IMR-90 (cell line): ENCODE measurements at regions of chr16 and their contacts with region 1.

Region 1: DNA sequence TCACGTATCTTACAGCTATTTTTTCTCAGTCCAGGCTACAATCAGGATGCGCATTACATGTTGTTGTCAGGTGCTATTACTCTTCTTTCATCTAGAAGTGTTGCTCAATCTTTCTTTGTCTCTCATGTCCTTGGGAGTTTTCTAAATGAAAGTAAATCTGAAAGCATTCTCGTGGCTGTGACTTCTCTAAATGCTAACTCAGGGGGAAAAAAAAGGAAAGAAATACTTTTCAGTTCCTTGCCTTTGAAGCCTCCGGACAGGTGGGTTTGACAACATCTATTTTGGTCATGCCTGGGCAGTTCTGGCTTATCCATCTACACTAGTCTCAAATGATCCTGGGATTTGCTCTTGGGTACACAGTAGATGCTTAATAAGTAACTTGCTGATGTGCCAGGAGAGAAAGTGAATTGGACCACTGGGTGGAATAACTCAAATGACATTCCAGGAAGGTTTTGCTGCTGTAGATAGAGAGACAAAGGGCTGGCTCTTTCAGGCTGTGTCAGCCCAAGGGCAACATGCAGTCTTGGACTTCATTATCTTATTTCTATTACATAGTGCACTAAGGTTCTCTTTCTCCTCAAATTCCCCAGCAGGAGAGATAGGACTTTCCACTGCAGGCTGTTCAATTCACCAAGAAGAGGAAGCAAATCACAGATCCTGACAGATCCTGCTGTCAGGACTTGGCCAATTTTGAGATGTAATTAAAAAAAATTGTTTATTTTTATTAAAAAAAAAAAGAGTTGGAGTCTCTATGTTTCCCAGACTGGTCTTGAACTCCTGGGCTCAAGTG is 63.6 kb upstream of the NFAT5 start:
- DNase-seq: no peak
- ATAC-seq: peak; percentile 32; the same call in 1 of the 2 replicates
- H3K4me3 ChIP-seq: no peak overlapping the region
- H3K27ac ChIP-seq: no peak overlapping the region
- H3K4me1 ChIP-seq: no peaks in the 10 kb centered on the region
- H3K27me3 ChIP-seq: no peaks in the 10 kb centered on the region; the same call in 1 of the 2 replicates
- CTCF ChIP-seq: no peak
- POLR2A ChIP-seq: no peak
- RAD21 ChIP-seq: no peak

Region 2: GRCh38 chr16:69514351-69514750 is 12.2 kb after region 1 on chr16:
- CTCF ChIA-PET with region 1: no interaction called
- POLR2A ChIA-PET with region 1: no interaction called
- dilution Hi-C with region 1: no loop called
- in situ Hi-C with region 1: no loop called
- intact Hi-C with region 1: loop called (anchors 1 kb)
- DNase-seq: no peak
- ATAC-seq: no peak
- H3K4me3 ChIP-seq: no peak overlapping the region
- H3K27ac ChIP-seq: no peak overlapping the region
- H3K4me1 ChIP-seq: peaks cover 5% of the 10 kb centered on the region; the same call in 1 of the 2 replicates
- H3K27me3 ChIP-seq: no peaks in the 10 kb centered on the region
- CTCF ChIP-seq: no peak
- POLR2A ChIP-seq: no peak
- RAD21 ChIP-seq: no peak

Region 3: DNA sequence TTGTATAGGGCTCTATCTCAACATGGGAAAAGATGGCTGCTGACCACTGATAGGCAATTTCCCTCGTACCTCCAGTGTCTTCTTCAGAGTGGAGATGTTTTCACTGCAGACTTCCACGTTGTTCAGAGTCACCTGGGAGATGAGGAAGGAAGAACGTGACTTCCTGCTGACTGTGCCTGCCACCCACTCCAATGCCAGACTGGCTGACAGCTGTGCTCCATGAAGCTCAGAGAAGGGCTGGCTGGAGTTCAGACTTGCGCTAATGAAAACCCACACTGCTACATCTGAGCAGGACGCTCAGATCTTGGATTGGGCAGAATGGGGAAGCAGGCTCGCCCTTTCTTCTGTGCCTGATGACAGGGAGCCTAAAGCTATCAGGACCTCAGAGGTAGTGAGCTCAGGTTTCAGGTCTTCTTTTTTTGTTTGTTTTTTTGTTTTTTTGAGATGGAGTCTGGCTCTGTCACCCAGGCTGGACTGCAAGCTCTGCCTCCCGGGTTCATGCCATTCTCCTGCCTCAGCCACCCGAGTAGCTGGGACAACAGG is 988.2 kb after region 1 on chr16:
- CTCF ChIA-PET with region 1: no interaction called
- POLR2A ChIA-PET with region 1: no interaction called
- dilution Hi-C with region 1: no loop called
- in situ Hi-C with region 1: no loop called
- intact Hi-C with region 1: no loop called
- DNase-seq: peak; percentile 15
- ATAC-seq: no peak
- H3K4me3 ChIP-seq: no peak overlapping the region
- H3K27ac ChIP-seq: no peak overlapping the region
- H3K4me1 ChIP-seq: peaks cover 3% of the 10 kb centered on the region
- H3K27me3 ChIP-seq: no peaks in the 10 kb centered on the region
- CTCF ChIP-seq: no peak
- POLR2A ChIP-seq: no peak
- RAD21 ChIP-seq: no peak